ENCODE measurements at regions of chr12 and their contacts with region 1.

Region 1: GRCh38 chr12:52879394-52880351 is 25.2 kb downstream of the KRT8 start:
- DNase-seq: peak; percentile 84 to 96 (median 90)
- H3K4me3 ChIP-seq: peak overlapping the region in 1 of 3 donors; percentile 15
- H3K27ac ChIP-seq: no peak overlapping the region
- H3K4me1 ChIP-seq: peaks cover 2 to 17% (median 4%) of the 10 kb centered on the region in 3 donors
- H3K27me3 ChIP-seq: no peaks in the 10 kb centered on the region
- CTCF ChIP-seq: peak; percentile 94

Region 2: DNA sequence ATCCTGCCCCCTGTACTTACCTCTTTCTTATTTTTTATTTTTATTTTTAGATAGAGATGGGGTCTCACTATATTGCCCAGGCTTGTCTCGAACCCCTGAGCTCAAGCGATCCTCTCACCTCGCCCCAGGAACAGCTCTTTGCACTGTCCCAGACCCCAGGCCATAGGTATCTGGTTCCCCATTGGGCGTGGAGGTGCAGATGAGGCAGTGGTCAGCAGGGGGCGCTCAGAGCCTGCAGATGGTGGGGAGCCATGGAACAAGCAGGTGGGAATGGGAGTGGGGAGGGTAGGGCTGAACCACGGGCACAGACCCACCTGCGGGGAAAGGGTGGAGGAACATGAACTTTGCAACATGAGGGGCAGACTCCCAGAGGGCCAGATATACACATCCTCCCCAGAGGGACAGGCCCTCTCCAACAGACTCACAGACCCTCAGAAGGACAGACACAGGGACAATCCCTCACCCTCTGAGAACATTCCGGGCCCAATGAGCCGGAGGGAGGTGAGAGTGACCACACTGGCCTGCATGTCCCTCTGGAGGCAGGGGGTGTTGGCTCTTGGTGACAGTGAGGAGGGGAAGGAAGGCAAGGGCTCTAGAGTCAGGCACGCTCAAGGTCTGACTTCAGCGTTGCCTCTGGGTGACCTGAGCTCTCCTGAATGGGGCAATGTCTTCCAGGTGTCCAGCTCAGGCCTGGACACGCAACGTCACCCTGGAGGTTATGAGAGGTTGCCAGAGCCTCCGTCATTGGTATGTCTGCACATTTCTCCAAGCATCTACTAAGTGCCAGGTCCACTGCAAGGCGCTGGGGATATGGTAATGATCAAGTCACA is 722.7 kb before region 1 on chr12:
- intact Hi-C with region 1: loop called (anchors 10 kb)
- DNase-seq: peak; percentile 76 to 90 (median 85)
- H3K4me3 ChIP-seq: no peak overlapping the region
- H3K27ac ChIP-seq: no peak overlapping the region
- H3K4me1 ChIP-seq: peaks cover 0 to 4% (median 0%) of the 10 kb centered on the region in 3 donors
- H3K27me3 ChIP-seq: no peaks in the 10 kb centered on the region
- CTCF ChIP-seq: peak; percentile 98

Region 3: GRCh38 chr12:52372216-52373154 is 507.2 kb before region 1 on chr12:
- intact Hi-C with region 1: loop called (anchors 10 kb)
- DNase-seq: peak; percentile 88 to 92 (median 88)
- H3K4me3 ChIP-seq: no peak overlapping the region
- H3K27ac ChIP-seq: no peak overlapping the region
- H3K4me1 ChIP-seq: peaks cover 0 to 11% (median 10%) of the 10 kb centered on the region in 3 donors
- H3K27me3 ChIP-seq: no peaks in the 10 kb centered on the region
- CTCF ChIP-seq: peak; percentile 93

Region 4: GRCh38 chr12:52582971-52583456 is 296.7 kb before region 1 on chr12:
- intact Hi-C with region 1: loop called (anchors 5 kb)
- DNase-seq: peak in 4 of 5 donors; percentile 73 to 86 (median 78)
- H3K4me3 ChIP-seq: no peak overlapping the region
- H3K27ac ChIP-seq: no peak overlapping the region
- H3K4me1 ChIP-seq: no peaks in the 10 kb centered on the region
- H3K27me3 ChIP-seq: no peaks in the 10 kb centered on the region
- CTCF ChIP-seq: peak; percentile 76

Region 5: GRCh38 chr12:52980693-52981423 is 101.2 kb after region 1 on chr12:
- intact Hi-C with region 1: loop called (anchors 5 kb)
- DNase-seq: peak; percentile 93 to 97 (median 94)
- H3K4me3 ChIP-seq: no peak overlapping the region
- H3K27ac ChIP-seq: no peak overlapping the region
- H3K4me1 ChIP-seq: peaks cover 0 to 8% (median 0%) of the 10 kb centered on the region in 3 donors
- H3K27me3 ChIP-seq: no peaks in the 10 kb centered on the region
- CTCF ChIP-seq: peak; percentile 99